K562 (cell line): ENCODE measurements at regions of chr19 and their contacts with region 1.

Region 1: GRCh38 chr19:41449079-41449864 is 6.3 kb downstream of the ERICH4 start:
- DNase-seq: peak; percentile 84 to 92 (median 92)
- ATAC-seq: peak; percentile 97
- H3K4me3 ChIP-seq: peak overlapping the region; percentile 17; the same call in 1 of the 2 replicates
- H3K27ac ChIP-seq: no peak overlapping the region
- H3K4me1 ChIP-seq: peaks cover 0 to 4% of the 10 kb centered on the region in 2 experiments; a peak in 1 of 5 replicates
- H3K27me3 ChIP-seq: peaks cover 4 to 17% of the 10 kb centered on the region in 2 experiments; a peak in 4 of 5 replicates
- CTCF ChIP-seq: peak; percentile 96 to 97 (median 97)
- EP300 ChIP-seq: no peak
- POLR2A ChIP-seq: no peak
- RAD21 ChIP-seq: peak; percentile 86 to 97

Region 2: GRCh38 chr19:41541990-41542584 is 92.8 kb after region 1 on chr19:
- CTCF ChIA-PET with region 1: interaction called, 14 read pairs
- POLR2A ChIA-PET with region 1: no interaction called
- in situ Hi-C with region 1: no loop called
- intact Hi-C with region 1: loop called (anchors 1 kb)
- DNase-seq: peak; percentile 44 to 76 (median 48)
- ATAC-seq: peak; percentile 69
- H3K4me3 ChIP-seq: no peak overlapping the region
- H3K27ac ChIP-seq: no peak overlapping the region
- H3K4me1 ChIP-seq: peaks cover 0 to 3% of the 10 kb centered on the region in 2 experiments; a peak in 2 of 5 replicates
- H3K27me3 ChIP-seq: peaks cover 2 to 11% of the 10 kb centered on the region in 2 experiments; a peak in 2 of 5 replicates
- CTCF ChIP-seq: peak; percentile 72 to 78 (median 72)
- EP300 ChIP-seq: no peak
- POLR2A ChIP-seq: no peak
- RAD21 ChIP-seq: peak; percentile 39 to 45

Region 3: DNA sequence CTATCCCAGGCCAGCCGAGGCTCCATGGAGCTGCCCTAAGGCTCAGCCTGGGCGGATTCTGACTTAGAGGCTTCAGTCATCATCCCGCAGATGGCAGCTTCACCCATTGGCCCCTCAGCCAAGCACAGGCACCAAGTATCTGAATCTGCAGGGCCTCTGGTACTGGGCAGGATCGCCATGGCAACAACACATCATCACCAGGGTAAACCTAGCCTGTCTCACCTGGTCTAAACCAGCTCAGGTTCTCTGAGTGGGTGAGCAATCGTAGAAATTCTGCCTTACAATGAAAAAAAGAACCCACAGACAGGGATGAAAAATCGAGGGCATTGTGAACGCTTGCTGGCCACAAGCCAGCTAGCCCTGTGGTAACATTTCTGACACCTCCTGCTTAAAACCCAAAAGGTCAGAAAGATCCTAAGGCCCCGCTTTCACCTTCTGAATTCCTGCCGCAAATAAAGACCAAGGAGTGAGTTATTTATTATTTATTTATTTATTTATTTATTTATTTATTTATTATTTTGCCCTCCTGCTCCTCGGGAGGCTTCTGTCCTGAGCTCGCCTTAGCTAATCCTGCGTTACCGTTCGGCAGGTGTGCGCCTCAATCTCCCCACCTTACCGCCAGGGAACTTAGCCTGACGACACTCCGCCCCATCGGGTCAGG is 114.7 kb after region 1 on chr19:
- CTCF ChIA-PET with region 1: interaction called, 6 read pairs
- POLR2A ChIA-PET with region 1: no interaction called
- in situ Hi-C with region 1: no loop called
- intact Hi-C with region 1: loop called (anchors 1 kb)
- DNase-seq: no peak
- ATAC-seq: no peak; the same call in 1 of the 3 replicates
- H3K4me3 ChIP-seq: no peak overlapping the region
- H3K27ac ChIP-seq: no peak overlapping the region
- H3K4me1 ChIP-seq: peaks cover 0 to 9% of the 10 kb centered on the region in 2 experiments; a peak in 2 of 5 replicates
- H3K27me3 ChIP-seq: peaks cover 9 to 20% of the 10 kb centered on the region in 2 experiments; a peak in 3 of 5 replicates
- CTCF ChIP-seq: no peak
- EP300 ChIP-seq: no peak
- POLR2A ChIP-seq: no peak
- RAD21 ChIP-seq: no peak

Region 4: GRCh38 chr19:41570639-41571112 is 121.4 kb after region 1 on chr19:
- CTCF ChIA-PET with region 1: interaction called, 13 read pairs
- POLR2A ChIA-PET with region 1: no interaction called
- in situ Hi-C with region 1: loop called (anchors 5 kb)
- intact Hi-C with region 1: no loop called
- DNase-seq: peak; percentile 76 to 88 (median 80)
- ATAC-seq: peak; percentile 100
- H3K4me3 ChIP-seq: no peak overlapping the region
- H3K27ac ChIP-seq: no peak overlapping the region
- H3K4me1 ChIP-seq: no peaks in the 10 kb centered on the region
- H3K27me3 ChIP-seq: peaks cover 0 to 11% of the 10 kb centered on the region in 2 experiments; a peak in 1 of 5 replicates
- CTCF ChIP-seq: peak; percentile 90 to 92 (median 92)
- EP300 ChIP-seq: no peak
- POLR2A ChIP-seq: no peak
- RAD21 ChIP-seq: peak; percentile 75 to 86

Region 5: DNA sequence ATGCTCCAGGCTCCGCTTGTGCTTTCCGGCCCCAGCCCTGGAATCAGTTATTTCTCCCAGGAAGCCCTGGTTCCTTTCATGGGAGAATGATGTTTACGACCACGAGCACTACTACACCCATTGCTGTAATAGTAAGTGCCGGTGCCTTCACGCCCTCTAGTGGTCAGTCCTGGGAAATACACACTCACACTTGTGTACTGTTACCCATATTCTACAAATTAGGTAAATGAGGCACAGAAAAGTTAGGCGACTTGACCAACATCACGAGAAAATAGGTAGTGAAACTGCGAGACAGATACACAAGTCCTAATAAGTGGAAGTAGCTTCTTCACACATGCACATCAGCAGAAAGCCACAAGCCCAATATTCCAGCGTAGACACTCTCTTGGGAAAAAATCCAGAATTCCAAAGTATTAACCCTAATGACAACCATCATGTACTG is 148.3 kb after region 1 on chr19:
- CTCF ChIA-PET with region 1: interaction called, 11 read pairs
- POLR2A ChIA-PET with region 1: no interaction called
- in situ Hi-C with region 1: no loop called
- intact Hi-C with region 1: no loop called
- DNase-seq: peak; percentile 73 to 84 (median 78)
- ATAC-seq: peak; percentile 92
- H3K4me3 ChIP-seq: no peak overlapping the region
- H3K27ac ChIP-seq: no peak overlapping the region
- H3K4me1 ChIP-seq: no peaks in the 10 kb centered on the region
- H3K27me3 ChIP-seq: peaks cover 0 to 9% of the 10 kb centered on the region in 2 experiments; a peak in 2 of 5 replicates
- CTCF ChIP-seq: peak; percentile 82 to 94 (median 87)
- EP300 ChIP-seq: no peak
- POLR2A ChIP-seq: no peak
- RAD21 ChIP-seq: peak in 1 of 2 experiments; percentile 38; a peak in 3 of 4 replicates